A673 (cell line): ENCODE measurements at regions of chr19 and their contacts with region 1.

Region 1: GRCh38 chr19:18152444-18152816 is 533 bp upstream of the PIK3R2 start:
- DNase-seq: peak; percentile 98
- H3K4me3 ChIP-seq: peak overlapping the region; percentile 96
- H3K27ac ChIP-seq: peak overlapping the region; percentile 93
- H3K4me1 ChIP-seq: peaks cover 7% of the 10 kb centered on the region
- H3K27me3 ChIP-seq: no peaks in the 10 kb centered on the region
- CTCF ChIP-seq: peak; percentile 77

Region 2: GRCh38 chr19:18007044-18007916 is 145.2 kb before region 1 on chr19:
- CTCF ChIA-PET with region 1: no interaction called
- POLR2A ChIA-PET with region 1: interaction called, 5 read pairs
- intact Hi-C with region 1: loop called (anchors 5 kb)
- DNase-seq: peak; percentile 83
- H3K4me3 ChIP-seq: peak overlapping the region; percentile 43
- H3K27ac ChIP-seq: no peak overlapping the region
- H3K4me1 ChIP-seq: peaks cover 8% of the 10 kb centered on the region
- H3K27me3 ChIP-seq: no peaks in the 10 kb centered on the region
- CTCF ChIP-seq: peak; percentile 99

Region 3: DNA sequence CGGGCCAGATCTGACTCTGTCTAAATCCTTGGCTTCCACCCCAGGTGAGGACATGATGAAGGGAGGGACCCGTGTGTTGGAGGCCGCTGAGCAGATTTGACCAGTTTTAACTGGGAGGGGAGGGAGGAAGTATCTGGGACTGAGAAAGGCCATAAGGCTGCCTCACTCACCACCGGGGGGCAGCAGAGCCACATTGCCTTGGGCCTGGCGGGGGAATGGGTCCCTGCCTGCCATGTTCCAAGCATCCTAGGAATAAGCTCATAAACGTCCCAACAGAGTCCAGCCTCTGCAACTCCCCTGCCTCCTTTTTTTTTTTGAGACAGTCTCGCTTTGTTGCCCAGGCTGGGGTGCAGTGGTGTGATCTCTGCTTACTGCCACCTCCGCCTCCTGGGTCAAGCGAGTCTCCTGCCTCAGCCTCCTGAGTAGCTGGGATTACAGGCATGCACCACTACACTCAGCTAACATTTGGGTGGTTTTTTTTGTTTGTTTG is 39.4 kb before region 1 on chr19:
- CTCF ChIA-PET with region 1: interaction called, 11 read pairs
- POLR2A ChIA-PET with region 1: no interaction called
- intact Hi-C with region 1: loop called (anchors 5 kb)
- DNase-seq: peak; percentile 86
- H3K4me3 ChIP-seq: no peak overlapping the region
- H3K27ac ChIP-seq: no peak overlapping the region
- H3K4me1 ChIP-seq: peaks cover 10% of the 10 kb centered on the region
- H3K27me3 ChIP-seq: no peaks in the 10 kb centered on the region
- CTCF ChIP-seq: peak; percentile 84

Region 4: DNA sequence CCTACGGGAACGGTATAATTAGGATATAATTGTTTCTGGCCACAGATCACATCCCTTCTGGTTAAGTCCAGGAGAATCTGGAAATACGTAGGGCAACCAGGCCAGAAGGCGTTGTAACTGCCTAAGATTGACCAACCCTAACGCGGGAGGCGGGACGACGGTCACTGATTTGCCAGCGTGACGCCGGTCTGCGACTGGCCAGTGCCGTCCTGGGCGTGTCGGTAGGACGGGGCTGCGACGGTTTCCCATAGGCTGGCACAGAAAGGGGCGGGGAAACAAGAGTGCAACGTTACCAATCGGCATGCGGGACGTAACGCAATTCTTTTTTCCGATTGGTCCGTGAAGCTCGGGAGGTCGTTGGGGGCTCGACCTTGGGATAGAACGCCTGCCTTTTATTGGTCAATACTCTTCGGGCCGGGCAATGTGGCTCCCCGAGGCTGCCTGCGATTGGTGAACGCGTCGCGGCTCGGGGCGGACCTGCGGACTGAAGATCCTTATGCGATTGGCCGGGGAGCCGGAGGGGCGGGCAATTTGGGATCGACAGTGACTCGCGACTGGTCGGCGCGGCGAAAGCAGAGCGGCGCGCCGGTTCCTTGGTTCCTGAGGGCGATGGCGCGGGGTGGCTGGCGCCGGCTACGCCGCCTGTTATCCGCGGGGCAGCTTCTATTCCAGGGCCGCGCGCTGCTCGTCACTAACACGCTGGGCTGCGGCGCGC is 40.4 kb after region 1 on chr19 and contains the start of gene MPV17L2:
- CTCF ChIA-PET with region 1: no interaction called
- POLR2A ChIA-PET with region 1: no interaction called
- intact Hi-C with region 1: loop called (anchors 2 kb)
- DNase-seq: peak; percentile 100
- H3K4me3 ChIP-seq: peak within 1 kb of the TSS; percentile 65
- H3K27ac ChIP-seq: peak within 1 kb of the TSS; percentile 82
- H3K4me1 ChIP-seq: peaks cover 15% of the 10 kb centered on the region
- H3K27me3 ChIP-seq: no peaks in the 10 kb centered on the region
- CTCF ChIP-seq: no peak
- total RNA-seq, gene MPV17L2: 20.2 and 21.3 TPM in 2 replicates

Region 5: GRCh38 chr19:18322759-18323460 is 170.5 kb after region 1 on chr19 and contains the start of gene LSM4:
- CTCF ChIA-PET with region 1: no interaction called
- POLR2A ChIA-PET with region 1: no interaction called
- intact Hi-C with region 1: loop called (anchors 5 kb)
- DNase-seq: peak; percentile 99
- H3K4me3 ChIP-seq: peak within 1 kb of the TSS; percentile 70
- H3K27ac ChIP-seq: peak within 1 kb of the TSS; percentile 92
- H3K4me1 ChIP-seq: peaks cover 11% of the 10 kb centered on the region
- H3K27me3 ChIP-seq: no peaks in the 10 kb centered on the region
- CTCF ChIP-seq: no peak
- total RNA-seq, gene LSM4: 252 and 262 TPM in 2 replicates